PC-9 (cell line): ENCODE measurements at regions of chr18 and their contacts with region 1.

Region 1: DNA sequence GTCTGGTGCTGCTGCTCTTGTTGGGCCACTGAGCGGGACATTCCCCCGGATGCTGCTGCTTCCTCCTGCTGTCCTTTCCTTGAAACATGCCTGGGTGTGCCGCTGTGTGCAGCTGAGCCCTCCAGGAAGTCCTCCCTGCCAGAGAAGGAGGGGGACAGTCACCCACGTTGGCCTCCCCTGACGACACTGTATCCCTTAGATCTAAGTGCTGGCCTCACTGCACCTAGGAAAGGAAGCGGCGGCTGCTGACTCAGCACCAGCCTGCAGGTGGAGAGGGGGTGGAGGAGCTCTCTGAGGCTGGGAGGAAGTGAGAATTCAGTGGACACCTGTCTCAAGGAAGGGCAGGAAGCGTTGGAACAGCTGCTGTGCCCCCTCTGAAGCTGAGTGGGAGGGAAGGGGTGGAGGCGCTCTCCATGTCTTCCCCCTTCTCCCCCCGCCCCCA is 239.8 kb downstream of the HAUS1 start:
- DNase-seq: no peak
- H3K4me3 ChIP-seq: no peak overlapping the region
- H3K27ac ChIP-seq: no peak overlapping the region
- H3K4me1 ChIP-seq: no peaks in the 10 kb centered on the region
- H3K27me3 ChIP-seq: no peaks in the 10 kb centered on the region
- CTCF ChIP-seq: no peak

Region 2: GRCh38 chr18:46374863-46375262 is 30.9 kb after region 1 on chr18:
- CTCF ChIA-PET with region 1: no interaction called
- POLR2A ChIA-PET with region 1: no interaction called
- intact Hi-C with region 1: no loop called
- DNase-seq: peak; percentile 76 to 77
- H3K4me3 ChIP-seq: no peak overlapping the region
- H3K27ac ChIP-seq: no peak overlapping the region
- H3K4me1 ChIP-seq: peaks cover 13% of the 10 kb centered on the region; the same call in 1 of the 2 replicates
- H3K27me3 ChIP-seq: no peaks in the 10 kb centered on the region
- CTCF ChIP-seq: no peak

Region 3: DNA sequence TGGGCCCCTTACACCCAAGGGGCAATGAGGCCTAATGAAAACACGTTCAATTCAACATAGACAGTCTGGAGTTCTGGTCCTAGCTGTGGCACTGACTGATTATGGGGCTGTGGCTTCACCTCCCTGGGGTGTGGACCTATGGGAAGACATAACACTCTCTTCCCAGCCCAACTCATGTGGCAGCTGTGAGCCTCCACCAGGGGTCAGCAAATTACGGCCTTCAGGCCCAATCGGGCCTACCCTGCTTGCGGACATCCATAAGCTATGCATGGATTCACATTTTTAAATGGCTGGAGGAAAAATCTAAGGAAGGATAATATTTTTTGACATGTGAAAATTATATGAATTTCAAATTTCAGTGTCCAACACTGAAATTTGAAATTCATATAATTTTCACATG is 211.8 kb after region 1 on chr18:
- CTCF ChIA-PET with region 1: interaction called, 11 read pairs
- POLR2A ChIA-PET with region 1: no interaction called
- intact Hi-C with region 1: no loop called
- DNase-seq: peak in 1 of 2 experiments; percentile 2
- H3K4me3 ChIP-seq: no peak overlapping the region
- H3K27ac ChIP-seq: no peak overlapping the region
- H3K4me1 ChIP-seq: no peaks in the 10 kb centered on the region
- H3K27me3 ChIP-seq: peaks cover 41% of the 10 kb centered on the region
- CTCF ChIP-seq: peak; percentile 40; the same call in 1 of the 2 replicates